CD4-positive, alpha-beta memory T cell (primary cell): ENCODE measurements at regions of chr3 and their contacts with region 1.

Region 1: DNA sequence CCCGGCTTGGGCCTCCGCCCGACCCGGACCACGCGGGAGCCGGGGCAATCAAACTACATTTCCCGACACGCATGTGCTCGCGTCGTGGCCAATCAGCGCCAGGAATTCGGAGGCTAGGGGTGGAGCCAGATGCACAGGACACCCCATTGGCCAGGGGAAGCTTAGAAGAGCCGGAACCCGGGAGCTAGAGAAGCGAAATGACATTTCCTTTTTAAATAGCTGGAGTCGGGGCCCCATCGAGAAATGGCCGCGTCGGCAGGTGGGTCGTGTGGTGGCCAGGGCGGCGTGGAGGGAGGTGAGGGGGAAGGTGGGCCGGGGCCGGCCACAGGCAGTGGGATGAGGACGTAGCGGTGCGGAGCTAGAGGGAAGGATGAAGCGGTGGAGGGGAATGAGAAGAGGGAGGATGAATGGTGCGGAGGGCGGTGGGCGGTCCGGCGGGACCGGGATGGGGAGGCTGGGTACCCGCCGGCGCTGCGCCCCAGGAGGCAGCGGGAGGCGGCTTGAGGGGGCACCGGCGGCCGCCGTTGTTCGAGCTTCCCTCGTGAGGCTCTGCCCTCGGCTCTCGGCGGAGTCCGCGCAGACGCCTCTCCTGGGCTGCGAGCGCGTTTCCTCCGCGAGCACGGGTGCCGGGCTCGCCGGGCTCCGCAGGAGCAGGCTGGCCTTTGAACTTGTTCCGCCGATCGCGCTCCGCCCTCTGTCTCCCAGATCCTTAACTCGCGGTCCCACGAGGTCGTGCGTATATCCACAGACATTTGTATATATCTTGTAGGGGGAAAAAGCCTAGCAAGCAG is at the start of gene KBTBD8:
- DNase-seq: peak; percentile 98 to 99 (median 98)
- H3K4me3 ChIP-seq: peak within 1 kb of the TSS; percentile 57 to 85
- H3K4me3 Mint-ChIP-seq: peak within 1 kb of the TSS; percentile 90 to 96 (median 94)
- H3K27ac ChIP-seq: peak within 1 kb of the TSS; percentile 67
- H3K27ac Mint-ChIP-seq: peak within 1 kb of the TSS; percentile 88 to 97 (median 95)
- H3K4me1 ChIP-seq: peaks cover 39% of the 10 kb centered on the region
- H3K4me1 Mint-ChIP-seq: peaks cover 23 to 48% (median 30%) of the 10 kb centered on the region in 4 donors
- H3K27me3 ChIP-seq: peaks cover 3% of the 10 kb centered on the region
- H3K27me3 Mint-ChIP-seq: peaks cover 0 to 4% of the 10 kb centered on the region in 2 donors
- total RNA-seq, gene KBTBD8: 8.3 to 10.8 TPM

Region 2: DNA sequence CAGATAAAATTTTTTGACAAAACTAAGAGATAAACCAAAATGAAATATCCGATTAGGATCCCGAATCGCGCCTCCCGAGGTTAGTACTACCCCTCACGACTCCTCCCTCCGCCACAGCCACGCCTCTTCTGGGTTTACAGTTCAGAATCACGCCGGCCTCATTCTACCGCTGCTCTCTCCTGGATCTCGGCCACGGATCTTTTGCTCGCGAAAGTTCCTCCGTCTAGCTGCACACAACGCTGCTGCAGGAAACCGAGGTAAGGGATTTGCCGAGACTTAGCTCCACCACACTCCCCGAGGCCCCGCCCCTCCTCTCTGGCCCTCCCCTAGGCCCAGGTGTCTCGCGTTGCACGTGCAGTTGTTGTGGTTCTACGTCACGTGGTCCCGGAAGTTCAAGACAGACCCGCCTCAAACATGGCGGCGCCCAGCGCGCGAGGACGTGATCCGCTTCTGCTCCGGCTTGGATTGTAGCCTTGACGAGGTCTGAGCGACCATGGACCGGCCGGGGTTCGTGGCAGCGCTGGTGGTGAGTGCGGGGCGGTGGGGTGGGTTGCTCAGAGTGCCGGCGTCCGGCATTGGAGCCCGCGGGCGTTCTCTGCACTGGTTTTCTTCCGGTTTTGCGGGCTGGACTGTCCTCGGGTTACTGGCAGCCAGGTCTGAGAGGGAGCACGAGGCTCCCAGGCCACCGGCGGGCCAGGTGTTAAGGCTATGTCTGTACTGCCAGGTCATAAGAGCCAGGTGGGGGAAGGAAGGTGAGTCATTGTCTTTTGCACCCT is 777.5 kb before region 1 on chr3 and contains the start of gene SLC25A26:
- CTCF ChIA-PET with region 1: no interaction called
- POLR2A ChIA-PET with region 1: interaction called, 3 read pairs
- intact Hi-C with region 1: loop called (anchors 1 kb)
- DNase-seq: peak; percentile 96 to 100 (median 98)
- H3K4me3 ChIP-seq: peak within 1 kb of the TSS; percentile 67 to 82
- H3K4me3 Mint-ChIP-seq: peak within 1 kb of the TSS; percentile 87 to 99 (median 92)
- H3K27ac ChIP-seq: peak within 1 kb of the TSS; percentile 73
- H3K27ac Mint-ChIP-seq: peak within 1 kb of the TSS; percentile 76 to 99 (median 91)
- H3K4me1 ChIP-seq: peaks cover 15% of the 10 kb centered on the region
- H3K4me1 Mint-ChIP-seq: peaks cover 16 to 44% (median 32%) of the 10 kb centered on the region in 4 donors
- H3K27me3 ChIP-seq: no peaks in the 10 kb centered on the region
- H3K27me3 Mint-ChIP-seq: no peaks in the 10 kb centered on the region
- total RNA-seq, gene SLC25A26: 18.9 to 21.1 TPM

Region 3: DNA sequence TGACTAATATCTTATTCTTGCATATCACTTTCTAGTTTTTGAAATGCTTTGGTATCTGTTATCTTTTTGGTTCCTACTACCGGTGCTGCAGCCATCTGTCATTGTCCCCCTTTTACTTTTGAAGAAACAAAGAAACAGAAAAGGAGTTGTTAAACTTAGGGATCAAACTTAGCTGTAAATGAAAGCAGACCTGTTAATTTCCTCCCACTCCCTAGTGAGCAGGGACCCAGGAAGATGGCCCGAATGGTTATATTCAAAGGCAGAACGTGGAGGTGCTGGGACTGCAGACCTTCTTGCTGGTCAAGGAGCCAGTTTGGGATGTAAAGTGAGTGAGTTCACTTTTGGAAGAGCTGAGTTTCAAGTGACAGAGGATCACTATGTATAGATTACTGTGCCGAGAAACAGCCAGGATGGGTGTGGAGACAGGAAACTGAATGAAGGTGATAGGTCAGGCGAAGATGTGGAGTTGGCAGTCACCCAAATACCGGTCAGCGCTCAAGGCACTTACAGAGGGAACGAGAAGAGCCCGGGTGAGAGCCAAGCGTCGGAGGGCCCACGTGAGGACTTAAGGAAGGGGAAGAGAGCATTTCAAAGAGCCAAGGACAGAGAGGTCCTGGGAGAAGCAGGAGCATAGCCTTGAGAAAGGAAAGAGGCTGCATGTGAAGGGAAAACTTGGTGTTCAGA is 19.9 kb after region 1 on chr3:
- CTCF ChIA-PET with region 1: interaction called, 5 read pairs
- POLR2A ChIA-PET with region 1: no interaction called
- intact Hi-C with region 1: loop called (anchors 2 kb)
- DNase-seq: no peak
- H3K4me3 ChIP-seq: no peak overlapping the region
- H3K4me3 Mint-ChIP-seq: peak overlapping the region in 4 of 8 donors; percentile 27 to 50 (median 44)
- H3K27ac ChIP-seq: no peak overlapping the region
- H3K27ac Mint-ChIP-seq: peak overlapping the region in 2 of 7 donors; percentile 8 to 59
- H3K4me1 ChIP-seq: peaks cover 23% of the 10 kb centered on the region
- H3K4me1 Mint-ChIP-seq: peaks cover 15 to 26% (median 19%) of the 10 kb centered on the region in 4 donors
- H3K27me3 ChIP-seq: no peaks in the 10 kb centered on the region
- H3K27me3 Mint-ChIP-seq: no peaks in the 10 kb centered on the region

Region 4: GRCh38 chr3:67083277-67083676 is 85.0 kb after region 1 on chr3:
- CTCF ChIA-PET with region 1: no interaction called
- POLR2A ChIA-PET with region 1: interaction called, 8 read pairs
- intact Hi-C with region 1: loop called (anchors 1 kb)
- DNase-seq: peak; percentile 53 to 75 (median 74)
- H3K4me3 ChIP-seq: peak overlapping the region in 1 of 2 donors; percentile 22
- H3K4me3 Mint-ChIP-seq: peak overlapping the region; percentile 52 to 87 (median 79)
- H3K27ac ChIP-seq: peak overlapping the region; percentile 7
- H3K27ac Mint-ChIP-seq: peak overlapping the region; percentile 37 to 98 (median 80)
- H3K4me1 ChIP-seq: peaks cover 23% of the 10 kb centered on the region
- H3K4me1 Mint-ChIP-seq: peaks cover 21 to 41% (median 27%) of the 10 kb centered on the region in 4 donors
- H3K27me3 ChIP-seq: no peaks in the 10 kb centered on the region
- H3K27me3 Mint-ChIP-seq: peaks cover 0 to 4% of the 10 kb centered on the region in 2 donors